ENCODE measurements at regions of chr3 and their contacts with region 1.

Region 1: GRCh38 chr3:187679638-187680396 is 9.6 kb upstream of the SST start:
- DNase-seq: no peak
- H3K4me3 ChIP-seq: no peak overlapping the region
- H3K27me3 ChIP-seq: no peaks in the 10 kb centered on the region; the same call in 1 of the 2 replicates
- CTCF ChIP-seq: peak; percentile 93

Region 2: GRCh38 chr3:185711255-185711870 is 1968.5 kb before region 1 on chr3:
- CTCF ChIA-PET with region 1: no interaction called
- POLR2A ChIA-PET with region 1: interaction called, 13 read pairs
- DNase-seq: no peak
- H3K4me3 ChIP-seq: no peak overlapping the region
- H3K27me3 ChIP-seq: no peaks in the 10 kb centered on the region
- CTCF ChIP-seq: no peak

Region 3: DNA sequence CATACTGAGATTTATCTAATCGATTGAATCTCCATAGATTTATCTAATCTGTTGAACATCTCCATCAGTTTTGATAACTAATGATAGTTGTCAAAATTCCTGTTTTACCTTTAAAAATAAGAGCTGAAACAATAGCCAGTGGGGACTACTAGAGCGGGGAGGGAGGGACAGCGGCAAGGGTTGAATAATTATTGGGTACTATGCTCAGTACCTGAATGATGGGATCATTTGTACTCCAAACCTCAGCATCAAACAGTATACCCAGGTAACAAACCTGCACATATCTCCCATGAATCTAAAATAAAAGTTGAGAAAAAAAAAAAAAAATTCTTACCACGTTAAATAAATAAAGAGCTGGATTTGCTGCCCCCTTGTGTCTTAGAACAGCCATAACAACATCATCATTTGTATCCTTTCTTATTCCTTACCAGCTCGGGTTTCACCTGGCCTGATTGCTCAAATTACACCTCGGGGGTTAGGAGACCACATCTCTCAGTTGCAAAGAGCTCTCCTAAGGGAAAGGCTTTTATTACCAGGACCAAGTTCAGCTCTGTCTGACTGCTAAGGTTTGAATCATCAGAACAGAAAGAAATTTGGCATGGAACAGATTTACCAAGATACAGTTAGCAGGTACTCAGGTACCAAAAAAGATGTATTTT is 514.8 kb before region 1 on chr3:
- CTCF ChIA-PET with region 1: interaction called, 10 read pairs
- POLR2A ChIA-PET with region 1: no interaction called
- DNase-seq: no peak
- H3K4me3 ChIP-seq: no peak overlapping the region
- H3K27me3 ChIP-seq: peaks cover 9% of the 10 kb centered on the region
- CTCF ChIP-seq: peak; percentile 62

Region 4: DNA sequence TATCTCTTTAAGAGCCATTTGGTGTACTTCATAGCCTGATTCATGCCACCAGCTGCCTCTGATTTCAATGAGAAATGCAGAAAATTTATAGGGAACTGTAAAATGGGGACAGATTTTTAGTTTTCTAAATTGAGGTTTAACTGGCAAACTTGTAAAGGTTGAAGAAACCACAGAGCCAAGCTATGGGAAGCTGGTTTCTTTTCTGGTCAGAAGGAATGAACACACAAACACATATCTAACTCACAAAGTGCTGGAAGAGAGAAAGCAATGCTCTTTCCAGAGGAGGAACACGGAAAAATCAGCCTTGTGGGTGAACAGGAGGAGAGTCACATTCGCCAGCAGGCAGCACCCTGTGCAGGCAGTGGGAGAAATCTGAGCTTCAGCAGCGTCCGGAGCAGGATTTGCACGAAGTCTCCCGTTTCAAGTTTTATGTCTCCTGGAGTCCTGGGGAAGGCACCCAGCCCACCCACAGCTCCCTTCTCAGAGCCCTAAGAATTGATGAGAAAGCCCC is 388.8 kb before region 1 on chr3:
- CTCF ChIA-PET with region 1: interaction called, 29 read pairs
- POLR2A ChIA-PET with region 1: interaction called, 12 read pairs
- DNase-seq: peak; percentile 74
- H3K4me3 ChIP-seq: peak overlapping the region; percentile 83
- H3K27me3 ChIP-seq: no peaks in the 10 kb centered on the region
- CTCF ChIP-seq: no peak

Region 5: DNA sequence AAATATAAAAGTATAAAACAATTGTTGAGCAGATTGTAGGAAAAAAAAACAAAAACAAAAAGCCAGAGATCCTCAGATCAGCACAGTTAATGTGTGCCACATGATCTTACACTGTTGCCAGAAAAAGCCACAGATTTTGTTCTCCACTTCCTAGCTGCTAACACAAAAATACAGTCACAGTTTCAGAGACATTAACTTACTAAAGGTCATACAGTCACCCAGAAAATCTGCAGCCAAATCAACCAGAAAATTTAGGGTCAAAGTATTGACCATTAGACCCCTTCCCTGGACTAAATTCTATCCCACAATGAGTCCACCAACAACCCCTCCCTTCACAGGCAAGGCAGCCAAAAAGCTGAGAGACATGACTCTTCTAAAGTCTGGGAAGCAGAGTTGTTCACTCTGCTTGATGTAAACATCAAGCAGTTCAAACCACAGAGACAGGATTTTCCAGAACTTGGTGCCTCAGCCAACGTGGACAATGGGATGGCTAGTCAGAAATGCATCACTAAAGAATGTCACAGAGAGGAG is 68.8 kb before region 1 on chr3:
- CTCF ChIA-PET with region 1: interaction called, 65 read pairs
- POLR2A ChIA-PET with region 1: no interaction called
- DNase-seq: peak; percentile 68
- H3K4me3 ChIP-seq: no peak overlapping the region
- H3K27me3 ChIP-seq: no peaks in the 10 kb centered on the region
- CTCF ChIP-seq: no peak

Region 6: GRCh38 chr3:187694801-187695200 is 15.0 kb after region 1 on chr3:
- CTCF ChIA-PET with region 1: interaction called, 14 read pairs
- POLR2A ChIA-PET with region 1: no interaction called
- DNase-seq: peak; percentile 70
- H3K4me3 ChIP-seq: no peak overlapping the region
- H3K27me3 ChIP-seq: peaks cover 1% of the 10 kb centered on the region
- CTCF ChIP-seq: no peak